Activated B cell treated with CpG ODN at 0.5 μM for 24 hours (primary cell): ENCODE measurements at regions of chr3 and their contacts with region 1.

Region 1: DNA sequence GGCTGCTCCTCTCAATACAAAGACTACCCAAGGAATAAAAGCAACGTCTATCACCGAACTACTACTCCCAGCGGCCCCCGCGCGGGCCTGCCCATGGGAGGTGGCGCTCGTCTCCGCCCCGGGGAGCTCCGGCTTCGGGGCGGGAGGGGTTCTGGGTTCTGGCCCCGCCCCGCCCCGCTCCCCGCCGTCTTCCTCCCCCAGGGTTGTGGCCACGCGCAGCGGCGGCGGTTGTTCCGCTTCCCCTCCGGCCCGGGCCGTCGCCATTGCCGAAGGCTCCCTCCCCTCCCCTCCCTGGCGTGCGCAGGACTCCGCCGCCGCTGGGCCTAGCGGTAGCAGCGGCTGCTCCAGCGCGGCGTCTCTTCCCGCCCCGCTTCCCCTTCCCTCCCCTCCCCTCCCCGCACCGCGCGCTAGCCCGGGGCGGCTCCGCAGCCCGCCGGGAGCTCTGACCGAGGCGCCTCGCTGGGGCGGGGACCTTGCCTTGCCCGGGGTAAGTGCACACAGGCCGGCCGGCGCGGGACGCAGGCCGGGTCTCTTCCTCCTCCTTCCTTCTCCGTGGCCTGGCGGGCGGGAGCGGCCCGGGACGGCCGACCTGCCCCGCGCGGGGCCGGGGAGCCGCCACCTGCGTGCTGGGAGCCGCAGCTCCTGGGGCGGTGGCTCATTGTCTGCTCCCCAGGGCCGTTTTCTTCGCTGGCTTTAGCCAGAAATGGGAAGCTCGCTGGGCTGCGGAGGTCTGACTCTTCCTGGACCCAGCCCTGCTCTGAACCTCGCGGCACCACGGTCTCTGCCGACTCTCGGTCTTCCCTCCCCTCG is at the start of gene PAK2:
- DNase-seq: peak; percentile 86
- ATAC-seq: peak; percentile 92
- H3K4me3 Mint-ChIP-seq: peak within 1 kb of the TSS; percentile 100
- H3K27ac Mint-ChIP-seq: peak within 1 kb of the TSS; percentile 99
- H3K4me1 Mint-ChIP-seq: peaks cover 33% of the 10 kb centered on the region
- H3K27me3 Mint-ChIP-seq: no peaks in the 10 kb centered on the region
- CTCF ChIP-seq: no peak
- total RNA-seq, gene PAK2: 73.7 and 87.1 TPM in 2 replicates

Region 2: GRCh38 chr3:196412704-196413103 is 327.2 kb before region 1 on chr3:
- CTCF ChIA-PET with region 1: no interaction called
- POLR2A ChIA-PET with region 1: no interaction called
- intact Hi-C with region 1: no loop called
- DNase-seq: no peak
- ATAC-seq: peak; percentile 71
- H3K4me3 Mint-ChIP-seq: peak overlapping the region; percentile 8
- H3K27ac Mint-ChIP-seq: no peak overlapping the region
- H3K4me1 Mint-ChIP-seq: peaks cover 61% of the 10 kb centered on the region
- H3K27me3 Mint-ChIP-seq: no peaks in the 10 kb centered on the region
- CTCF ChIP-seq: no peak

Region 3: GRCh38 chr3:196700801-196701200 is 39.1 kb before region 1 on chr3:
- CTCF ChIA-PET with region 1: no interaction called
- POLR2A ChIA-PET with region 1: interaction called, 5 read pairs
- intact Hi-C with region 1: loop called (anchors 5 kb)
- DNase-seq: no peak
- ATAC-seq: no peak
- H3K4me3 Mint-ChIP-seq: no peak overlapping the region
- H3K27ac Mint-ChIP-seq: no peak overlapping the region
- H3K4me1 Mint-ChIP-seq: peaks cover 12% of the 10 kb centered on the region
- H3K27me3 Mint-ChIP-seq: no peaks in the 10 kb centered on the region
- CTCF ChIP-seq: no peak

Region 4: DNA sequence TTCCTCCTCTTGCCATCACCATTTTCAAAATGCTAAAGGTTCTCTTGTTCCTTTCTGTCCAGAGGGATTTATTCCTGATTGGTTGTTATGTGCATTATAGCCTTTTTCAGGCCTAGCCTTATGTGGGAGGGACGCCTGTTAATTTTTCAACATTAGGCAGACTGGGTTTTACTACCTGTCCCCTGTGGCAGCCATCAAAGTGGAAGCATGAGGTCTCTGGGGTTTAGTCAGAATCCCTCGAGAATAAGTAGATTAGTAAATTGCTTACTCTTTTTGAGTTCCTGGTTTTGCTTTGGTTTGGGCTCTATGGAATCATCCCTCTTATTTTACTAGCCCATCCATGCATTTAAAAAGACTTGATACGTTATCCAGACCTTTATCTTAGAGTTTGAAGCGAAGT is 32.2 kb after region 1 on chr3:
- CTCF ChIA-PET with region 1: no interaction called
- POLR2A ChIA-PET with region 1: interaction called, 8 read pairs
- intact Hi-C with region 1: loop called (anchors 1 kb)
- DNase-seq: no peak
- ATAC-seq: peak; percentile 87
- H3K4me3 Mint-ChIP-seq: peak overlapping the region; percentile 50
- H3K27ac Mint-ChIP-seq: peak overlapping the region; percentile 10
- H3K4me1 Mint-ChIP-seq: peaks cover 68% of the 10 kb centered on the region
- H3K27me3 Mint-ChIP-seq: no peaks in the 10 kb centered on the region
- CTCF ChIP-seq: no peak

Region 5: DNA sequence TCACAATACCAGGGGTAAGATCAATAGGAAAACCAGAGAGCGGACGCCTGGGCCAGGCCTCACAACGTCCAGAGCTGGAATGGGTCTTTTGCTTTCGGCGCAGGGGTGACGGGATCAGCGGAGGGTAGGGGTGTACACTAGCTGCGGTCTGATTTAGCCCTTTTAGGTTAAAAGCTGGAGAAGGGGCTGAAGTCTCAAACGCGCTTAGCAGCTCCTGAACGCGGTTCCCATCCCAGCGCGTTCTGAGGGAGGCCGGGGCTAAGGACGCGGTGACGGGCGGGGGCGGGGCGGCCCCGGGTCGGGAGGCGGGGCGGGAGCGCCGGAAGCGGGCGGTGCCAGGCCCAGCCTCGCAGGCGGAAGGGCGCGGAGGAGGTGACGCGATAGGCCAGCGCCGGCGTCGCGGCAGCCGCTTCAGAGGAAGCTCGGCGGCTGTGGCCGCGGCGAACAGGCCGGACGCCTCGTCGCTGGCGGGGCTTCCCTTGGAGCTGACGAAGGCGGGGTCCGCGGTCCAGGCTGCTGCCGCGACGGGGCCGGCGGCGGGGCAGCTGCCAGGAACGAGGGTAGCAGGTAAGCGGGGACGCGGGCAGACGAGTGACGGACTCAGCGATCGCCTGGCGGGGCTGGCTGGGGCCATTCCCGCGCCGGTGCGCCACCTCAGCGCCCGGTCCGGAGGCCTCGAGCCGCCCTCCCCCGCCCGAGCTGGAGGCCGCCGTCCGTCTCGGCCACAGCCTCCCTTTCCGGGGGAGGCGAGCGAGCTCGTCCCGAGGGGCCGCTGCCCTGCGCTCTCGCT is 127.8 kb after region 1 on chr3 and contains the start of gene SENP5:
- CTCF ChIA-PET with region 1: no interaction called
- POLR2A ChIA-PET with region 1: interaction called, 10 read pairs
- intact Hi-C with region 1: loop called (anchors 5 kb)
- DNase-seq: peak; percentile 87
- ATAC-seq: peak; percentile 97
- H3K4me3 Mint-ChIP-seq: peak within 1 kb of the TSS; percentile 93
- H3K27ac Mint-ChIP-seq: peak within 1 kb of the TSS; percentile 89
- H3K4me1 Mint-ChIP-seq: peaks cover 28% of the 10 kb centered on the region
- H3K27me3 Mint-ChIP-seq: no peaks in the 10 kb centered on the region
- CTCF ChIP-seq: no peak
- total RNA-seq, gene SENP5: 35.8 and 45.2 TPM in 2 replicates